ENCODE measurements at regions of chr6 and their contacts with region 1.

Region 1: GRCh38 chr6:41334482-41335040 is 847 bp upstream of the NCR2 start:
- DNase-seq: no peak
- CTCF ChIP-seq: peak; percentile 25

Region 2: DNA sequence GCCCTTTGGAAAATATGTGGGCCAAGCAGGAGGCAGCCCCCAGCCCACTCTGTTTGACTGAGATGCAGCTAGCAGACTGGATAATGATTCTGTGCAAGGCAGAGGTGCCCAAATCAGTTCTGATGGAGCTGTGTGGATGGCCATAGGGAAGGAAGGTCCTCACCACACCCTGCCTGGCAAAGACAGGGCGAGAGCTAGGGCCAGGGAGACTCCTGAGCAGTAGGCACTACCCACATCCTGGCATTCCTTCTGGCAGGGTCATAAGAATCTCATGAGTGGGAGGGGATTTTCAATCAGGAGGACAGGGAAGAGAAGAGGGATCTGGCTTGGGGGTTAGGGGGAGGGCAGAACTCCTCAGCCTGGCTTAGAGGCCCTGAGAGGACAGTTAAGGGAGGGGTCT is 153.0 kb before region 1 on chr6:
- CTCF ChIA-PET with region 1: no interaction called
- POLR2A ChIA-PET with region 1: no interaction called
- DNase-seq: no peak
- CTCF ChIP-seq: no peak

Region 3: DNA sequence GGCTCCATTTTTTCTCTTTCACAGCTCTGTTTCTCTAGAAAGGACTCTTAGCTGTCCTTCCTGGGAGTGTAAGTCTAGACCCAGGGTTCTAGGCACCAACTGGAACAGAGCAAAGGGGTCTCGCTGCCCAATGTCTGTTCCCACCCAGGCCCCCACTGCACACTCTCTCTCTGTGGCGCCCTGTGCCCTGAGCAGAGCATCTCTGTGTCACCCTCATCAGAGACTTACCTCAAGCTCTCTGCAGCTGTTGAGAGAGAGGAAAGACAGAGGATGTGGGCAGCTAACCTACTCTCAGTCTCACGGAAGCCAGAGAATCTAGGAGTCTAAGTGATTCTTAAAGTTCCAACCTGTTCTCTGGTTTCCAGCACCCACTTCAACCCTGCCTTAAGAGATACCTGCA is 10.3 kb after region 1 on chr6:
- CTCF ChIA-PET with region 1: interaction called, 13 read pairs
- POLR2A ChIA-PET with region 1: no interaction called
- DNase-seq: peak; percentile 49
- CTCF ChIP-seq: no peak

Region 4: DNA sequence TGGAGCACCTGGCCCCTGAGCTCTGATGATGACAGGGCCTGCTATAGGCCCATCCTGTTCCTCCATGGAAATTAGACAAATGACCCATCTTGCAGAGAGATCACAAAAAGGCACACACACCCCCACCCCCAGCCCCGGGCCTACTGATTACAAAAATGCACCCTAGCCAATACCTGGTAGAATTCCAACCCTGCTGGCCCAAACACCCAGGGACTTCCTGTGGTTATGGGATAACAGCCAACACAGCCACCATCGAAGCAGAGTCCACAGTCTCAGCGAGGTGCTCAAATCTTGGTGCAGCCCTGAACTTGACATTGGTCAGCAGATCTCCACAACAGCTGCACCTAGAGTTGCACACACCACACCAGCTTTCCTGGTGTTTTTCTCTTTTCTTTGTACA is 17.8 kb after region 1 on chr6:
- CTCF ChIA-PET with region 1: interaction called, 13 read pairs
- POLR2A ChIA-PET with region 1: no interaction called
- DNase-seq: no peak
- CTCF ChIP-seq: no peak

Region 5: GRCh38 chr6:41374618-41375590 is 40.3 kb after region 1 on chr6:
- CTCF ChIA-PET with region 1: no interaction called
- POLR2A ChIA-PET with region 1: no interaction called
- DNase-seq: no peak
- CTCF ChIP-seq: no peak